ENCODE measurements at regions of chr11 and their contacts with region 1.

Region 1: DNA sequence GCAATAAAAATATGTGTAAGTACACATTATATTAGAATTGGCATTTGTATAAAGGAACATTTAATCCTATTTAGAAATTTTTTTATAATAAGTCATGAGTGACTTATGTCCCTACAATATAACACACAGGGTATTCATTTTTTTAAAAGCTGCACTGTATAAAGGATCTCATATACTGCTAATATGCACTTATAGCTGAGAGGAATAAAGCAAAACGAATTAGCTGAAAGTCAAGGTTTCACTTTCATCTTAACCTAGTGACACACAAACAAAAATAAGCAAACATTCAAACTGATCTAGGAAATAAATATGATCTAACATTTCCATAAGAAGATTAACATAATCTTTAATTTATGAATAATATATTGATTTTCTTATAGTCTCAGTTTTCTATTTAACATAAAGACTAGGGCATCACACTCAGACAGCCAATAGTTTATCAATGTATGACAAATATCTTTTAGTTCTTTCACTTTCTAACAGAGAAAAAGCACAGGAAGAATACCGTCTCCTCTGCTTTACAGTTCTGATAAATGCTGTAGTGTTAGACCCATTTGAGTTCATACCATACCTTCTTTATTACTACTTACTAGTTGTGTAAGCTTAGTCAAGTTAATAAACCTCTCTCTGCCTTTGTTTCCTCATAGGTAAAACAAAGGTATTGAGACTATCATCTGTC is 42.9 kb downstream of the DCDC1 start:
- DNase-seq: no peak
- ATAC-seq: no peak
- H3K4me3 ChIP-seq: no peak overlapping the region
- H3K27ac ChIP-seq: no peak overlapping the region
- H3K4me1 ChIP-seq: no peaks in the 10 kb centered on the region
- H3K27me3 ChIP-seq: no peaks in the 10 kb centered on the region
- CTCF ChIP-seq: no peak
- POLR2A ChIP-seq: no peak
- RAD21 ChIP-seq: no peak

Region 2: GRCh38 chr11:31351168-31351567 is 24.6 kb after region 1 on chr11:
- CTCF ChIA-PET with region 1: no interaction called
- POLR2A ChIA-PET with region 1: no interaction called
- dilution Hi-C with region 1: no loop called
- in situ Hi-C with region 1: no loop called
- intact Hi-C with region 1: no loop called
- DNase-seq: no peak
- ATAC-seq: no peak
- H3K4me3 ChIP-seq: no peak overlapping the region
- H3K27ac ChIP-seq: no peak overlapping the region
- H3K4me1 ChIP-seq: no peaks in the 10 kb centered on the region
- H3K27me3 ChIP-seq: no peaks in the 10 kb centered on the region
- CTCF ChIP-seq: no peak
- POLR2A ChIP-seq: no peak
- RAD21 ChIP-seq: no peak

Region 3: DNA sequence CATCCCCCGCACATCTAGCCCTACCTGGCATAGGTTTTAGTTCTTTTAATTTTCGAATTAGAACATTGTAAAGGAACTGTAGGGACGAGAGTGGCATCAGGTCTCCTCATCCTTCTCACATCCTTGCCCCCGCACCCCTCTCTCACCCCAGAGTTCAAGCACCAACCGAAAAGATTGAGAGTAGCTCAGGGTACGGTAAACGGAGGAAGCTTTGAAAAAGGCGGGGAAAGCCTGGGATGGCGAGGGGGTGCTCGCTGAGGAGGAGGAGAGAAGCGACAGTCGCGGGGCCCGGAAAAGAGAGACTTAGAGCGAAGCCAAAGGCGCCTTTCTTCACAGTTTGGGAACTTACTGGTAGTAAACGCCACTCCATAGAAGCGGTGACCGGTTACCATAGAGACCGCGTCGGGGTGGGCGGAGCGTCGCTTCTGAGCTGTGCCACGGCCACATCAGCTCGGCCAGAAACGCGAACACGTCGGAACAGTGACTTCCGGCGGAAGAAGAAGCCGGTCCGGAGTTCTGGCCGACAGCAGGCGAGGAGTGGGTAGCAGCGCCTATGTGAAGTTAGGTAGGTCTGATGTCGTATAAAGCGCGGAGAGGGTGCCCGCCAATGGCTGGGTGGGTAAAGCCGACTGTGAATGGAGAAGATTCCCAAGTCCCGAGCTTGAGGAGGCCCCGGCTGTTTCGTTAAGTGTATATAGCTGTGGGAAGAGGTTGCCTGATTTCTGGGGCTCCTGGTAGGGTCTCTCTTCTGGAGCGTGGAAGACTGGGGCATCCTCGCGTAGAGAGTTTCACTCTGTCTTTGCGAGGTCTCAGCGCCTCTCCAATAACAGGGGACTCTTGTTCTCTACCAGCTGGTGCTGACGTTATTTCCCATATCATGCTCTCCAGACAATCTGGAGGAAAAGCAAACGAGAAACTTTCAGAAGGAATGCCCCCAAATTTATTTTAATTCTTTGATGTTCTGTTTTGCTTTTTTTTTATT is 43.0 kb after region 1 on chr11 and contains the starts of genes DCDC1 and DNAJC24:
- CTCF ChIA-PET with region 1: no interaction called
- POLR2A ChIA-PET with region 1: no interaction called
- dilution Hi-C with region 1: no loop called
- in situ Hi-C with region 1: no loop called
- intact Hi-C with region 1: loop called (anchors 1 kb)
- DNase-seq: peak; percentile 91
- ATAC-seq: peak; percentile 100
- H3K4me3 ChIP-seq: peak within 1 kb of the TSS; percentile 64
- H3K27ac ChIP-seq: peak within 1 kb of the TSS; percentile 69
- H3K4me1 ChIP-seq: no peaks in the 10 kb centered on the region
- H3K27me3 ChIP-seq: no peaks in the 10 kb centered on the region
- CTCF ChIP-seq: no peak
- POLR2A ChIP-seq: peak; percentile 56; the same call in 1 of the 2 replicates
- RAD21 ChIP-seq: no peak
- total RNA-seq, gene DCDC1: under 0.01 TPM in 1 of 2 replicates, not detected in the other
- total RNA-seq, gene DNAJC24: 8.2 and 16.1 TPM in 2 replicates

Region 4: DNA sequence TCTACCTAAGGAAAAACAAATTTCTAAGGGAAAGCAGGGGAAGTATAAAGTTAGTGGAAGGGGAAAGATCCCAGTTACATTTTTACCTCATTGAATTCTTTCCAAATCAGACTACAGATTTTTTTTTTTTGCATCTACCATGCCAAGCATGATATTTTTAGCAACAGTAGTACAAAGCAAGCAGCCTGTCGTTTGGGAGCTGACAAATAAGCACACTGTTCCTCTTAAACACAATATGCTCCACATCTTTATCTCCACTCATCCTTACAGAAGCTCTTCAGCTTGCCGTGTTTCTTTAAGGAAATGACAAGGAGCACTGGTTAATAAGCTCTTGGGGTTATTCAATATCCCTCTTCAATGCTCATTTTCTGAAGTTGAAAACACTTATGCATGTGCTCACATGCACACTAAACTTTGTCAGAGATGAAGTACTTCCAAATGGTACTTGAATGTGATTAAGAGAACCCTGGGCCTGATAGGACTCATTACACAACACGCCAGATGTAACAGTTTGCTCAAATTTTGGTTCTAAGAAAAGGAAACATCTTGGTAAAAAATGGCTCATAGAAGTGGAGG is 430.7 kb after region 1 on chr11:
- CTCF ChIA-PET with region 1: no interaction called
- POLR2A ChIA-PET with region 1: no interaction called
- dilution Hi-C with region 1: no loop called
- in situ Hi-C with region 1: no loop called
- intact Hi-C with region 1: no loop called
- DNase-seq: no peak
- ATAC-seq: no peak
- H3K4me3 ChIP-seq: no peak overlapping the region
- H3K27ac ChIP-seq: no peak overlapping the region
- H3K4me1 ChIP-seq: no peaks in the 10 kb centered on the region
- H3K27me3 ChIP-seq: no peaks in the 10 kb centered on the region
- CTCF ChIP-seq: no peak
- POLR2A ChIP-seq: no peak
- RAD21 ChIP-seq: no peak

Measured in IMR-90 (cell line).